ENCODE measurements at regions of chr15 and their contacts with region 1.

Region 1: DNA sequence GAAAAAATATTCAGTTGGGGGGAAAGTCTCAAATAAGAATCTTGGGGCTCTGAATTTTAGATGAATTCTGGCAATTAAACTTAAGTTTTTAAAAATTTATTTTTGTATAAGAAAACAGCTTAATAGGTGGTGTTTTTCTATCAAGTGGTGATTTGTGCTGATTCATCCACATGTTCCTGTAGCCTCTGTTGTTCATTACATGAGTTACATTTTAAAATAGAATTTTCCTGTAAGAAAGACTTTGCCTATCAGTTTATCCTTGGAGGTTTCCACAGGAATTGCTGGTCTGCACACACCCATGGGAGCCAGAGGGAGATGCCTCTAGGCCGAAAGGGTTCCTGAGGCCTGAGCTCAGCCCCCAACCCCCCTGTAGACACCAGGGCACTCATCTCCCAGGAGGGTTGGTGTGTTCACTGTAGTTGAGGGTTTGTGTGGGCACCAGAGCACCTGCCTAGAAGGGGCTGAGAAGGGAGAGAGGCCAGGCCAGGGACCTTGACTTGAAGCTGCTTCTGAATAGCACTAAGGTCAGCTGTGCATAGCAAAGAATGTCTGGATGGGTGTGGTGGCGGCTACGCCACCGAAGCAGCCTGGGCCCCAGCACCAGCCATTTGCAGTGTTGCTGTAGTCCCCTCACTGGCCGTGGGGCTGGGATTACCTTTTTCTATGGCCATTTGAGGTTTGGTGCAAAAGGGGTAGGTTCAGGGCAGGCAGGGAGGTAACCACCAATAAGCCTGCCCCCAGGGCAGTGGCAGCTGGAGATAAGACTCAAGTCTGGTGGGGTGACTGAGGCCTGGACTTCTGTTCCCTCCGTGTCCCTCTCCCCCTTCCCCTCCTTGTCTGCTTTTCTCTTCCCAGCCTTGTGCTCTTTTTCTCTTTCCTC is 11.9 kb downstream of the DNAJA4 start:
- DNase-seq: no peak
- ATAC-seq: no peak
- H3K4me3 Mint-ChIP-seq: no peak overlapping the region
- H3K27ac Mint-ChIP-seq: peak overlapping the region; percentile 40
- H3K4me1 Mint-ChIP-seq: peaks cover 8% of the 10 kb centered on the region
- H3K27me3 Mint-ChIP-seq: no peaks in the 10 kb centered on the region

Region 2: DNA sequence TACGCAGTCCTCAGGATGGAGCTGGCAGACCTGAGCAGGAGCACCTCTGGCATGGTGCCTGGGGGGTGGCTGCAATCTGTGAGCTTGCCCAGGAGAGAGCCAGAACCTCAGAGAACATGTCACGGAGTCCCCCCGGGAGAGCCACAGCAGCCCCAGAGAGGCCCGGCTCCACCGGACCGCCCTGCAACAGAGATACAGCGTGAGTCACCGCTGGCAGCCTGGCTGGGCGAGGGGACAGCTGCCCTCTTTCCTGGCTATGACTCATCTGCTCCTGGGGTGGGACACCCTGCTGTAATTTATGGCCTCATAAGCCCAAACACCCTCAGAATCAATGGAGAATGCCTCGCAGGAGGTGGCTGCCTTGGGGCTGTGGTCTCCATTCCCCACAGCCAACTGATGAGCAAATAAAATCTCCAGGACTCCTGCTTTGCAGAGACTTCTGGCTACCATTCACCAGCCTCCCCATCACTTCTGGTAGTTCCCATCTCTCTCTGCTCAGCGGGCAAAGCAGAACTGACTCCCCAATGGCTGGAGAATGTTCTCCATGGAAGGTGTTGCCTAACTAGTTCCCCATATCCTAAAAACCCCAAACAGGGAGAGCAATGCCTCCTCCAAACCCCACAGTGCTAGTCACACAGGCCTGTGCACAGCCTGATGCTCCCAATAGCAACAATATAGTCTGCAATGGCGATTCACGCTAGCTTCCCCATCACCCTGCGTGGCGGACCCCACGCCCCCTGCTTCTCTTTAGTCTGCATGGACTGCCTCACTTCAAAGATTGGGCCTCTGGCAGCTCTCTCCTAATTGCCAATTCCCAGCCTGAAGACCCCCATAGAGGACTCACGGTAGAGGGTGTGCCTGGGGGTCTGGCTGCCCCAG is 63.5 kb before region 1 on chr15:
- CTCF ChIA-PET with region 1: no interaction called
- POLR2A ChIA-PET with region 1: no interaction called
- DNase-seq: no peak
- ATAC-seq: no peak
- H3K4me3 Mint-ChIP-seq: no peak overlapping the region
- H3K27ac Mint-ChIP-seq: no peak overlapping the region
- H3K4me1 Mint-ChIP-seq: no peaks in the 10 kb centered on the region
- H3K27me3 Mint-ChIP-seq: peaks cover 9% of the 10 kb centered on the region

Region 3: DNA sequence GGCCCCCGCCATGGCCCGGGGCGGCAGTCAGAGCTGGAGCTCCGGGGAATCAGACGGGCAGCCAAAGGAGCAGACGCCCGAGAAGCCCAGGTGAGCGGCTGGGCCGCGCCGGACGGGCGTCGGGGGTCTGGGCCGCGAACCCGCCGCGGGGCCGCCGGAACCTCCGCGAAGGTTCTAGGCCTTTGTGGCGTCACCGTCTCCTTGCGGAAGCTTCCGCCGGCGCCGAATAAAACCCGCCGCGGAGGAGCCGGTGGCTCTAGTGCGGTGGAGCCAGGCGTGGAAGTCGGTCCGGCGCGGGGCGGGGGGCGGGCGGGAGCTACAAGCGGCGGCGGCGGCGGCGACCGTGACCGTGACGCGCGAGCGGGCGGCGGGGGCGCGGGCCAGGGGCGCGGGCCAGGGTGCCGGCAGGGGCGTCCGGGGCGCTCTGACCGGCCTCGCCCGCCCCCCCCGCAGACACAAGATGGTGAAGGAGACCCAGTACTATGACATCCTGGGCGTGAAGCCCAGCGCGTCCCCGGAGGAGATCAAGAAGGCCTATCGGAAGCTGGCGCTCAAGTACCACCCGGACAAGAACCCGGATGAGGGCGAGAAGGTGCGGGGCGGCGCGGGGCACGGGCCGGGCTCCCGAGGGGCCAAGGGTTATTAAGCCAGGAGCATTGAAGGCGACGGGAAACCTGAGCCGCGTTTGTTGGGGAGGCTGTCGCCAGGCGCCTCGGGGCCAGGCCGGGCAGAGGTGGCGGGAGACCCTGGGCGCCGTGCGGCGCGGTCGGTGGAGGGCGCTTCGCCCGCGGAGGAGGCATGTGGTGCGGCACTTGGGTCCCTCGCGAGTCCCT is 11.8 kb before region 1 on chr15 and contains the start of gene DNAJA4:
- CTCF ChIA-PET with region 1: interaction called, 9 read pairs
- POLR2A ChIA-PET with region 1: interaction called, 12 read pairs
- DNase-seq: peak; percentile 73
- ATAC-seq: peak; percentile 76
- H3K4me3 Mint-ChIP-seq: peak within 1 kb of the TSS; percentile 73
- H3K27ac Mint-ChIP-seq: peak within 1 kb of the TSS; percentile 82
- H3K4me1 Mint-ChIP-seq: peaks cover 29% of the 10 kb centered on the region
- H3K27me3 Mint-ChIP-seq: peaks cover 2% of the 10 kb centered on the region
- total RNA-seq, gene DNAJA4: 29.7 TPM

Measured in activated CD8-positive, alpha-beta T cell treated with anti-CD3 and anti-CD28 coated beads, Interleukin-2, amount 10 ng/mL, durations not matched to agents 7 days and 5 days (primary cell).